Activated T-helper 2 cell treated with anti-CD3 and anti-CD28 coated beads, Interferon-gamma antibody, Interleukin-2, Interleukin-4, amounts not matched to agents 10 μg/mL and 5 μg/mL and 100 μg/mL, durations not matched to agents 14 hours and 24 hours and 36 hours (primary cell): ENCODE measurements at regions of chr20 and their contacts with region 1.

Region 1: GRCh38 chr20:17898548-17898994 is 70.0 kb downstream of the SNX5 start:
- DNase-seq: peak; percentile 49
- H3K4me3 Mint-ChIP-seq: no peak overlapping the region
- H3K27ac Mint-ChIP-seq: no peak overlapping the region
- H3K4me1 Mint-ChIP-seq: peaks cover 30% of the 10 kb centered on the region
- H3K27me3 Mint-ChIP-seq: peaks cover 21% of the 10 kb centered on the region

Region 2: GRCh38 chr20:17530716-17531664 is 367.6 kb before region 1 on chr20 and contains the start of gene BFSP1:
- intact Hi-C with region 1: loop called (anchors 5 kb)
- DNase-seq: peak; percentile 55
- H3K4me3 Mint-ChIP-seq: peak within 1 kb of the TSS; percentile 82
- H3K27ac Mint-ChIP-seq: peak within 1 kb of the TSS; percentile 92
- H3K4me1 Mint-ChIP-seq: peaks cover 22% of the 10 kb centered on the region
- H3K27me3 Mint-ChIP-seq: peaks cover 15% of the 10 kb centered on the region
- total RNA-seq, gene BFSP1: 0.51 and 0.82 TPM in 2 replicates

Region 3: DNA sequence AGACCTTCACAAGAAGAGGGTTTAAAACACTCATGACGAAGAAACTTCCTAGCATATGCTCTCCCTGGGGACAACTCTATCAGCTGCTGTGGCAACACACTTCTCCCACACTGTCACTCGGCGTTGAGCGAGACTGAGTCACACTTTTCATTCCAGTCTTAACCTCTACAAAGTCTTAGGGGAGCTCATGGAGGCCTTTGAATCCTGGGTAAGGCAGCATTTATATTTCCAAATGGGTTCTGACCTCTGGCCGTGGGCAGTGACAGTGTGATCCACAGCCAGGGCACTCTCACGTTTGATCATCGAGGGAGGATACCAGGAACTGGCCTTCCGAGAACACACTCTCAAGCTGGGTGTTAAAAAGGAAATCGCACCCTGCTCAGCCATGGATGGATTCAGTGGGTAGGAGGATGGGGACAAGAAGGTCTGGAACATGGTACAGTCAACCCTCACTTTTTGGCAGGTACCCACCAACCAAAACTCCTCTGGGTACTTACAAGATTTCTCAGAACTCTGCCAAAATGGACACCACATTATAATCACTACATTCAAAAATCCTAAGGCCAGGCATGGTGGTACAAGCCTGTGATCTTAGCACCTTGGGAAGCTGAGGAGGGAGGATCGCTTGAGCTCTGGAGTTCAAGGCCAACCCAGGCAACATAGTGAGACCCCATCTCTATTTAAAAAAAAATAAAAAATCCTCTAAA is 236.1 kb before region 1 on chr20:
- intact Hi-C with region 1: loop called (anchors 5 kb)
- DNase-seq: no peak
- H3K4me3 Mint-ChIP-seq: no peak overlapping the region
- H3K27ac Mint-ChIP-seq: peak overlapping the region; percentile 61
- H3K4me1 Mint-ChIP-seq: peaks cover 60% of the 10 kb centered on the region
- H3K27me3 Mint-ChIP-seq: no peaks in the 10 kb centered on the region

Region 4: DNA sequence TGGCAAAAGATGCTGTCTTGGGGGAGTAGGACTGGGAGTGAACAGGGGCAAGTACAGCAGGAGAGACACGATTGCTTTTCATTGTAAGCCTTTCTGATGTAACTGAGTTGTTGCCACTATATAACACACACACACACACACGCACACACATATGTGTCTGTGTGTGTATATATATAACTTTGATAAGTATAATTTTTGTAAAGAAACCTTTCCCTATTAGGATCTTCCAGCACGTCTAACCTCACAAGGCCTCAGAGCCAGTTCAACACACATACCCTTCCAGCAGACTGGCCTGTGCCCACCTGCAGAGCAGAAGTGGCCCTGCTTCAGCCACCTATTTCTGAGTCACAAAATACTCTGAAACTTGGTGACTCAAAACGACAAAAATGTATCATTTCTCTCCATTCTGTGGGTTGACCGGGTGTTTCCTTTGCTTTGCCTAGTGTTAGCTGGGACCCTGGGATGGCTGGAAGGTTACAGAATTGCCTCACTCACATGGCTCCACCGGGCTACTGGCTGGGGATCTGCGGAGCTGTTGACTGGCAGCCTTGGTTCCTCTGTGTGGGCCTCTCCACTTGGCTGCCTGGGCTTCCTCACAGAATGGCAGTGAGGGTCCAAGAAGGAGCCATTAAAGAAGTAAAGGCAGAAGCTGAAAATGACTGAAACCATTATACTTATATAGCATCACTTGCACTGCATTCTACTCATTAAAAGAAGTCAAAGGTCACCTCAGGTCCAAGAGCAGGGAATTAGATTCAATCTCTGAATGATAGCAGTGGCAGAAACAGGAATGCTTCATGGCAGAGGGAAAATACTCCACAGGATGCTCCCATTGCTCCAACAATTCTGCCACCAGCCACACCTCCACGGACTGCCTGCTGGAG is 72.4 kb before region 1 on chr20:
- intact Hi-C with region 1: loop called (anchors 5 kb)
- DNase-seq: no peak
- H3K4me3 Mint-ChIP-seq: no peak overlapping the region
- H3K27ac Mint-ChIP-seq: no peak overlapping the region
- H3K4me1 Mint-ChIP-seq: peaks cover 17% of the 10 kb centered on the region
- H3K27me3 Mint-ChIP-seq: no peaks in the 10 kb centered on the region

Region 5: GRCh38 chr20:17843246-17844132 is 55.1 kb before region 1 on chr20:
- intact Hi-C with region 1: no loop called
- DNase-seq: peak; percentile 31
- H3K4me3 Mint-ChIP-seq: no peak overlapping the region
- H3K27ac Mint-ChIP-seq: no peak overlapping the region
- H3K4me1 Mint-ChIP-seq: peaks cover 32% of the 10 kb centered on the region
- H3K27me3 Mint-ChIP-seq: peaks cover 2% of the 10 kb centered on the region

Region 6: GRCh38 chr20:17878912-17879602 is 19.5 kb before region 1 on chr20:
- intact Hi-C with region 1: loop called (anchors 2 kb)
- DNase-seq: no peak
- H3K4me3 Mint-ChIP-seq: peak overlapping the region; percentile 6
- H3K27ac Mint-ChIP-seq: peak overlapping the region; percentile 74
- H3K4me1 Mint-ChIP-seq: peaks cover 18% of the 10 kb centered on the region
- H3K27me3 Mint-ChIP-seq: no peaks in the 10 kb centered on the region